Naive thymus-derived CD4-positive, alpha-beta T cell (primary cell): ENCODE measurements at regions of chr16 and their contacts with region 1.

Region 1: DNA sequence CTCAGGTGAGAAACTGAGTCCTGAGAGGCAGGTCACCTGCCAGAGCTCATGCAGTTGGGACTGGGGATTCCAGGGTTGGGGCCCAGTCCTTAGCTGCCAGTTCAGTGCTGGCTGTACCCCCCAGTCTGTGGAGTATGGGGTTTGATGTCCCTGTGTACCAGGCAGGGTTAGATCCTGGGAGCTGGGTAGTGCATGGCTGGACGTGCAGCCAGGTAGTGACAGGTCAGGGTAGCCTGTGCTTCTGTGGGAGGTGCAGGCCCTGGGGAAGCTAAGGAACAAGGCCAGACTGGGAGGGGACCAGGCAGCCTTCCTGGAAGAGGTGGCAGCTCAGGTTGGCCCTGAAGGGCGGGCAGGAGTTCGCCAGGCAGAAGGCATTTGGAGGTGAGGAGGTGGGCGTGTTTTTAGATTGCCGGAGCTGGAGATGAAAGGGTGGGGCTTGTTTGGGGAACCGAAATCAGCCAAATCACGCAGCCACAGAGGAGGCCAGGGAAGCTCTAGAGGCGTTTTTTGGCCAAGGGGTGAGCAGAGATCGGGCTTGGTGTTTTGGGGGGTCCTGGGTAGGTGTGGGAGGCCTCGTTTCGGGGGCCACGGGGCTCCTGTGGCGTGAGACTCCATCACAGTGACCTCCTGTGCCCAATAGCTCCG is 7.5 kb downstream of the ADCY7 start:
- DNase-seq: peak in 5 of 9 donors; percentile 26 to 52 (median 40)
- ATAC-seq: peak; percentile 65
- H3K4me3 ChIP-seq: peak overlapping the region; percentile 67
- H3K4me3 Mint-ChIP-seq: peak overlapping the region; percentile 83 to 98 (median 92)
- H3K27ac ChIP-seq: peak overlapping the region; percentile 88
- H3K27ac Mint-ChIP-seq: peak overlapping the region; percentile 95 to 99 (median 99)
- H3K4me1 ChIP-seq: peaks cover 93% of the 10 kb centered on the region in 2 donors
- H3K4me1 Mint-ChIP-seq: peaks cover 72 to 99% (median 93%) of the 10 kb centered on the region in 7 donors
- H3K27me3 ChIP-seq: no peaks in the 10 kb centered on the region
- H3K27me3 Mint-ChIP-seq: no peaks in the 10 kb centered on the region

Region 2: GRCh38 chr16:50245417-50246298 is 28.1 kb before region 1 on chr16:
- CTCF ChIA-PET with region 1: no interaction called
- POLR2A ChIA-PET with region 1: interaction called, 5 read pairs
- intact Hi-C with region 1: loop called in 1 of 2 experiments (anchors 2 kb)
- DNase-seq: peak in 5 of 9 donors; percentile 15 to 67 (median 18)
- ATAC-seq: peak; percentile 84
- H3K4me3 ChIP-seq: peak overlapping the region; percentile 42
- H3K4me3 Mint-ChIP-seq: peak overlapping the region; percentile 58 to 82 (median 76)
- H3K27ac ChIP-seq: no peak overlapping the region
- H3K27ac Mint-ChIP-seq: peak overlapping the region in 4 of 9 donors; percentile 41 to 80 (median 61)
- H3K4me1 ChIP-seq: peaks cover 6 to 8% of the 10 kb centered on the region in 2 donors
- H3K4me1 Mint-ChIP-seq: peaks cover 0 to 16% (median 6%) of the 10 kb centered on the region in 7 donors
- H3K27me3 ChIP-seq: no peaks in the 10 kb centered on the region
- H3K27me3 Mint-ChIP-seq: peaks cover 0 to 13% (median 0%) of the 10 kb centered on the region in 5 donors

Region 3: DNA sequence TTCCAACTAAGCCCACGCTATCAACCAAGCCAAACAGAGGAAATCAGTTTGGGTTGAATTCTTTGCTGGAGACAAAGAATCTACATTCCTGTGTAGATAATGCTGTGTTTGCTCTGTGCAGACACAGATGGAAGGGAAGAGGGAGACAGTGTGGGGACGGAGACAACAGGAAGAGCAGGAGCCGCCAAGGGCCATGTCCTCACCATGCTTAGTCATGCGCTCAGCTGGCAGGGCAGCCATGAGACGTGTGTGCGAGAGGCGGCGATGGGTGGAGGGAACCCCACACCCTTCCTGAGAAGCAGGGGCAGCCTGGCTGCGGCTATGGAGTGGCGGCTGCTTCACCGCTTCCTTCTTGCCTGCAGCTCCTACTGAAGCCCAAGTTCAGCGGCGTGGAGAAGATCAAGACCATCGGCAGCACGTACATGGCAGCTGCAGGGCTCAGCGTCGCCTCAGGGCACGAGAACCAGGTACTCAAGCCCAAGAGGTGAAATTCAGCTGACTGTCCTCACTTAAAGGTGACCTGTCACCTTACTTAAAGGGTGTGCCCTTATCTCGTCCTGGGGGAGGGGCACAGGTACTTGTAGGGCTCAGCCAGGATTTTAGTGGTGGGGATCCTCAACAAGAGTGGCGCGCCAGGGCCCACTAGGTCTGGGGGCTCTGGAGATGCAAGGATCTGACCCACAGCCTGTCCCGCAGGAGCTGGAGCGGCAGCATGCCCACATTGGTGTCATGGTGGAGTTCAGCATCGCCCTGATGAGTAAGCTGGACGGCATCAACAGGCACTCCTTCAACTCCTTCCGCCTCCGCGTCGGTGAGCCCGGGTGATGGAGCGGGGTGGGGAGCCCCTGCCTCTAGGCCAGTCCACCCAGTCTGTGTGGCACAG is 40.0 kb after region 1 on chr16:
- CTCF ChIA-PET with region 1: interaction called, 4 read pairs
- POLR2A ChIA-PET with region 1: interaction called, 25 read pairs
- intact Hi-C with region 1: no loop called
- DNase-seq: peak in 8 of 9 donors; percentile 25 to 48 (median 35)
- ATAC-seq: peak; percentile 88
- H3K4me3 ChIP-seq: no peak overlapping the region
- H3K4me3 Mint-ChIP-seq: peak overlapping the region; percentile 6 to 72 (median 52)
- H3K27ac ChIP-seq: peak overlapping the region; percentile 43
- H3K27ac Mint-ChIP-seq: peak overlapping the region; percentile 81 to 93 (median 89)
- H3K4me1 ChIP-seq: no peaks in the 10 kb centered on the region
- H3K4me1 Mint-ChIP-seq: peaks cover 14 to 36% (median 25%) of the 10 kb centered on the region in 7 donors
- H3K27me3 ChIP-seq: no peaks in the 10 kb centered on the region
- H3K27me3 Mint-ChIP-seq: no peaks in the 10 kb centered on the region